ENCODE measurements at regions of chr3 and their contacts with region 1.

Region 1: DNA sequence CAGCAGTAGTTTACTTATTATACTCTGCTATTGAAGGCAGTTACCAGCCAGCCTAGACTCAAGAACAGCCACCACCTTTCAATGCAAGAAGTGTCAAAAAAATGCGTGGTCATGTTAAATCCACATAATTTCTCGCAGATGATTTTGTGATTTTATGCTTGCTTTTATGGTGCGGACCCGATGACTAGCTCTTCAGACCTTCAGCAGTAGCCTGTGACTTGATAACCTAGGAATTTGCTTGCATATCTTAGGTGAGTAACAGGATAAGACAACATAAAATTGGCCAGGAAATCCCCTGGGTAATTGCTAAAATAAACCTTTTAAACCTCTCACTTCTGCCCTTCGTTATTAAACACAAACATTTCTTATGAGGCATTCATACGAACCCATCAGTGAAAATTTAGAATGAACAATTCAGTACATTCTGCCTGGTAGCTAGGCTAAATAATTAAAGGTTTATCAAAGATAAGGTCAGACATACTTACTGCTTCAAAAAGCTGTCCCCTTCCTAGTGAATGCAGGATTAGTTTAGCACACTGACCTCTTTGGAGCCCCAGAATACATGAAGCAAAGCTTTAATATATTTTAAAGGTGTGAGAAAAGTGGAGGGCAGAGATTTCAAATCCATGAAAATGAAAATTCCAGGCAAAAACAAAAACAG is 798.8 kb downstream of the OTOL1 start:
- DNase-seq: peak; percentile 47
- H3K4me3 Mint-ChIP-seq: peak overlapping the region; percentile 11
- H3K27ac Mint-ChIP-seq: peak overlapping the region; percentile 40
- H3K4me1 Mint-ChIP-seq: peaks cover 41% of the 10 kb centered on the region
- H3K27me3 Mint-ChIP-seq: no peaks in the 10 kb centered on the region
- CTCF ChIP-seq: no peak

Region 2: GRCh38 chr3:162354356-162354755 is 58.9 kb after region 1 on chr3:
- CTCF ChIA-PET with region 1: no interaction called
- intact Hi-C with region 1: no loop called
- DNase-seq: no peak
- H3K4me3 Mint-ChIP-seq: no peak overlapping the region
- H3K27ac Mint-ChIP-seq: no peak overlapping the region
- H3K4me1 Mint-ChIP-seq: no peaks in the 10 kb centered on the region
- H3K27me3 Mint-ChIP-seq: no peaks in the 10 kb centered on the region
- CTCF ChIP-seq: no peak

Region 3: DNA sequence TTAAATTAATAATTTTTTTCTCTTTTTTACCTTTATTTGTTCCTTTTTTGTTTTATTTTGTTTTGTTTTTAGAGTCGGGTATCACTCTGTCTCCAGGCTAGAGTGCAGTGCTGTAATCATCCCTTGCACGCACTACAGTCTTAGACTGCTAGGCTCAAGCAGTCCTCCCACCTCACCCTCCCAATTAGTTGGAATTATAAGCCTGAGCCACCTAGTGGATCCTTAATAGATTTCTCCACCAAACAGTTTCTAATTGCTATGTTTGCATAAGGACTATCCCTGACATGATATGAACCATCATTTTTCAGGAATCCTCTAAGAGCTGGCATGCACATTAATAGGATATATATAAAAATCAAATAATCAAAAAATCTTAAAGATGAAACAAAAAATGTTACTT is 194.4 kb after region 1 on chr3:
- CTCF ChIA-PET with region 1: no interaction called
- intact Hi-C with region 1: loop called (anchors 5 kb)
- DNase-seq: peak; percentile 22
- H3K4me3 Mint-ChIP-seq: no peak overlapping the region
- H3K27ac Mint-ChIP-seq: no peak overlapping the region
- H3K4me1 Mint-ChIP-seq: no peaks in the 10 kb centered on the region
- H3K27me3 Mint-ChIP-seq: no peaks in the 10 kb centered on the region
- CTCF ChIP-seq: peak; percentile 63

Region 4: GRCh38 chr3:162719684-162720341 is 424.4 kb after region 1 on chr3:
- CTCF ChIA-PET with region 1: no interaction called
- intact Hi-C with region 1: loop called (anchors 10 kb)
- DNase-seq: peak; percentile 38
- H3K4me3 Mint-ChIP-seq: no peak overlapping the region
- H3K27ac Mint-ChIP-seq: no peak overlapping the region
- H3K4me1 Mint-ChIP-seq: no peaks in the 10 kb centered on the region
- H3K27me3 Mint-ChIP-seq: no peaks in the 10 kb centered on the region
- CTCF ChIP-seq: no peak

Measured in Calu3 (cell line).